Natural killer cell (primary cell): ENCODE measurements at regions of chr11 and their contacts with region 1.

Region 1: GRCh38 chr11:33329705-33330329 is 72.6 kb downstream of the HIPK3 start:
- DNase-seq: peak in 1 of 2 donors; percentile 76
- ATAC-seq: peak; percentile 64 to 78 (median 74)
- H3K4me3 ChIP-seq: no peak overlapping the region
- H3K4me3 Mint-ChIP-seq: no peak overlapping the region
- H3K27ac ChIP-seq: no peak overlapping the region
- H3K27ac Mint-ChIP-seq: peak overlapping the region; percentile 31 to 79
- H3K4me1 ChIP-seq: no peaks in the 10 kb centered on the region
- H3K4me1 Mint-ChIP-seq: peaks cover 21 to 31% of the 10 kb centered on the region in 2 donors
- H3K27me3 ChIP-seq: no peaks in the 10 kb centered on the region
- H3K27me3 Mint-ChIP-seq: no peaks in the 10 kb centered on the region
- CTCF ChIP-seq: peak; percentile 67

Region 2: GRCh38 chr11:32960553-32961164 is 369.2 kb before region 1 on chr11:
- intact Hi-C with region 1: loop called (anchors 2 kb)
- DNase-seq: peak in 1 of 2 donors; percentile 75
- ATAC-seq: peak in 2 of 3 donors; percentile 45 to 64
- H3K4me3 ChIP-seq: no peak overlapping the region
- H3K4me3 Mint-ChIP-seq: no peak overlapping the region
- H3K27ac ChIP-seq: no peak overlapping the region
- H3K27ac Mint-ChIP-seq: no peak overlapping the region
- H3K4me1 ChIP-seq: no peaks in the 10 kb centered on the region
- H3K4me1 Mint-ChIP-seq: peaks cover 0 to 10% of the 10 kb centered on the region in 2 donors
- H3K27me3 ChIP-seq: no peaks in the 10 kb centered on the region
- H3K27me3 Mint-ChIP-seq: no peaks in the 10 kb centered on the region
- CTCF ChIP-seq: peak; percentile 76

Region 3: DNA sequence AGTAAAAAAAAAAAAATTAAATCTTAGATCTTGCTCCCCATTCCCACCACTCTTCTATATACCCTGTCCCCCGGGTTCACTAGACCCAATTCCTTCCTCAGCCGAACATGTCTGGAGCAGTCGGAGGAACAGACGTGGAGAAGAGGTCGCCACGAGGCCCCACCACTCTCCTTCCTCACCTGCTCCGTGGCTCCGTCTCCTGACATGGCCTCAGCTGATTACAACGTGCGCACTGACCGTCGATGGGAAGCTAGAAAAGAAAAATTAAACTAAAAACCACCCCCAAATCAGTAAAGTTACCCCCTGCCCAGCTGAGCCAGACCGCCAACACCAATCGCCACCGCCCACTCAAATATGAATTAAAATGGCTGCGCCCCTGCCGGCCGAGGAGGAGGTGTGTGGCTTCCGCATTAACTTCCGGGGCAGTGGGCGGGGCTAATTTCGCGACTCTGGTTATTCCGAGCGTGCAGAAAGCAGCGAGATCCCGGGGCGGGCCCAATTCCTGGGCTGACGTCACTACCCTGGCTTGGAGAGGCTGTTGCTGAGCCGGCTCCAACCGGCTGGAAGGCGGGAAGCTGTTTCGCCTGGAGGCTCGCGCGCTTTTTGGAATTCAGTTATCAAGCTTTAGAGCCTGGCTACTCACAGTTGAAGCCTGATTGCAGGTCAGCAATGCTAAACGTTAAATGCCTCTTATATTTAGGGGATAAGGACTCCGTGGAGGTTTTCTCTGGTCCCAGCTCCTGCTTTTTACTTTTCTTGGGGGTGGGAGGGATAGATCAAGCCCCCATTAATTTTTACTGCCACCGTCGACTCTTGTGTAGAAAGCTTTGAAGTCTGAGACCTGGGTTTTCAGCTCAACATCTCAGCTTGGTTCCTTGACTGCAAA is 168.5 kb before region 1 on chr11 and contains the start of gene CSTF3:
- intact Hi-C with region 1: loop called (anchors 1 kb)
- DNase-seq: peak; percentile 92 to 96
- ATAC-seq: peak; percentile 96 to 98 (median 96)
- H3K4me3 ChIP-seq: peak within 1 kb of the TSS; percentile 99
- H3K4me3 Mint-ChIP-seq: peak within 1 kb of the TSS; percentile 100
- H3K27ac ChIP-seq: peak within 1 kb of the TSS; percentile 79
- H3K27ac Mint-ChIP-seq: peak within 1 kb of the TSS; percentile 98 to 100
- H3K4me1 ChIP-seq: peaks cover 15% of the 10 kb centered on the region
- H3K4me1 Mint-ChIP-seq: peaks cover 46 to 55% of the 10 kb centered on the region in 2 donors
- H3K27me3 ChIP-seq: no peaks in the 10 kb centered on the region
- H3K27me3 Mint-ChIP-seq: no peaks in the 10 kb centered on the region
- CTCF ChIP-seq: peak; percentile 40
- total RNA-seq, gene CSTF3: 10.9 to 15.6 (median 12.0) TPM

Region 4: DNA sequence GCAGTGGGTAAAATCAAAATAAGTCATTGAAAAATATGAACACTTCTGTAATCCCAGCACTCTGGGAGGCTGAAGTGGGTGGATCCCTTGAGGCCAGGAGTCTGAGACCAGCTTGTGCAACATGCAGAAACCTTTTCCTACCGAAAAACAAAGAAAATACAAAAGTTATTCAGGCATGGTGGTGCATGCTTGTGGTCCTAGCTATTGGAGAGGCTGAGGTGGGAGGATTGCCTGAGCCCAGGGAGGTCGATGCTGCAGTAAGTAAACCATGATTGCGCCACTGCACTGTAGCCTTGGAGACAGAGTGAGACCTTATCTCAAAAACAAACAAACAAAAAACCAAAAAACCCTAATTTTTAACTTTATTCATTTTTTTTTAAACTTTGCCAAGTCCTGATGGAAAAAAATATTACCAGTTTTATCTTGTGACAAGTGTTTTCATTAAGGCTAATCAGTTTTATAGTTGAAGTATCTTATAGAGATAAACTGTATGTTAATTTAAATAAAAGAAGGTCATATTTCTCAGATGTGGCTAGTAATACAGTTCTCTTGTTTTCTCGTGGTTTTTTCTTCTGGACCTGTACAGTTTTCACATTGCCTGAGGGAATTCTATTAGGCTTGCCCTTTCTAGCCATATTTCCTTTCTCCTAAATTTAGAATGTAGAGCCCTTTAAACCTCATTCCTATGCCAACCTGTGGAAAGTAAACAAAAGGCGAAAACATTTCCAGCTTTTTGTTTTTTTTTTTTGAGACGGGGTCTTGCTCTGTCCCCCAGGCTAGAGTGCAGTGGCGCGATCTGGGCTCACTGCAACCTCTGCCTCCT is 63.2 kb before region 1 on chr11:
- intact Hi-C with region 1: no loop called
- DNase-seq: no peak
- ATAC-seq: no peak
- H3K4me3 ChIP-seq: no peak overlapping the region
- H3K4me3 Mint-ChIP-seq: no peak overlapping the region
- H3K27ac ChIP-seq: no peak overlapping the region
- H3K27ac Mint-ChIP-seq: peak overlapping the region in 1 of 2 donors; percentile 9
- H3K4me1 ChIP-seq: peaks cover 3% of the 10 kb centered on the region
- H3K4me1 Mint-ChIP-seq: peaks cover 30 to 41% of the 10 kb centered on the region in 2 donors
- H3K27me3 ChIP-seq: no peaks in the 10 kb centered on the region
- H3K27me3 Mint-ChIP-seq: no peaks in the 10 kb centered on the region
- CTCF ChIP-seq: no peak

Region 5: GRCh38 chr11:33620423-33621171 is 290.8 kb after region 1 on chr11:
- intact Hi-C with region 1: no loop called
- DNase-seq: no peak
- ATAC-seq: no peak
- H3K4me3 ChIP-seq: no peak overlapping the region
- H3K4me3 Mint-ChIP-seq: no peak overlapping the region
- H3K27ac ChIP-seq: no peak overlapping the region
- H3K27ac Mint-ChIP-seq: no peak overlapping the region
- H3K4me1 ChIP-seq: no peaks in the 10 kb centered on the region
- H3K4me1 Mint-ChIP-seq: no peaks in the 10 kb centered on the region
- H3K27me3 ChIP-seq: no peaks in the 10 kb centered on the region
- H3K27me3 Mint-ChIP-seq: peaks cover 7 to 18% of the 10 kb centered on the region in 2 donors
- CTCF ChIP-seq: no peak